Motor neuron (in vitro differentiated cells): ENCODE measurements at regions of chr6 and their contacts with region 1.

Region 1: GRCh38 chr6:116100419-116101301 is at the start of gene NT5DC1:
- ATAC-seq: peak; percentile 89 to 93 (median 91)
- H3K4me3 ChIP-seq: peak within 1 kb of the TSS; percentile 60 to 88 (median 76)
- H3K27ac ChIP-seq: peak within 1 kb of the TSS; percentile 79 to 86
- H3K4me1 ChIP-seq: no peaks in the 10 kb centered on the region
- total RNA-seq, gene NT5DC1: 6.0 to 27.8 (median 10.3) TPM

Region 2: GRCh38 chr6:116217069-116217468 is 116.4 kb after region 1 on chr6:
- in situ Hi-C with region 1: loop called in 1 of 9 experiments (anchors 25 kb)
- ATAC-seq: peak in 6 of 8 experiments; percentile 38 to 78 (median 62)
- H3K4me3 ChIP-seq: no peak overlapping the region
- H3K27ac ChIP-seq: no peak overlapping the region
- H3K4me1 ChIP-seq: no peaks in the 10 kb centered on the region